CD4-positive, alpha-beta T cell (primary cell): ENCODE measurements at regions of chr1 and their contacts with region 1.

Region 1: GRCh38 chr1:147351140-147351835 is 108.8 kb downstream of the CHD1L start:
- DNase-seq: no peak
- ATAC-seq: no peak
- H3K4me3 ChIP-seq: no peak overlapping the region
- H3K4me3 Mint-ChIP-seq: no peak overlapping the region
- H3K27ac ChIP-seq: no peak overlapping the region
- H3K27ac Mint-ChIP-seq: no peak overlapping the region
- H3K4me1 ChIP-seq: no peaks in the 10 kb centered on the region
- H3K4me1 Mint-ChIP-seq: no peaks in the 10 kb centered on the region
- H3K27me3 ChIP-seq: peaks cover 3 to 8% of the 10 kb centered on the region in 2 experiments
- H3K27me3 Mint-ChIP-seq: peaks cover 29% of the 10 kb centered on the region
- CTCF ChIP-seq: no peak

Region 2: DNA sequence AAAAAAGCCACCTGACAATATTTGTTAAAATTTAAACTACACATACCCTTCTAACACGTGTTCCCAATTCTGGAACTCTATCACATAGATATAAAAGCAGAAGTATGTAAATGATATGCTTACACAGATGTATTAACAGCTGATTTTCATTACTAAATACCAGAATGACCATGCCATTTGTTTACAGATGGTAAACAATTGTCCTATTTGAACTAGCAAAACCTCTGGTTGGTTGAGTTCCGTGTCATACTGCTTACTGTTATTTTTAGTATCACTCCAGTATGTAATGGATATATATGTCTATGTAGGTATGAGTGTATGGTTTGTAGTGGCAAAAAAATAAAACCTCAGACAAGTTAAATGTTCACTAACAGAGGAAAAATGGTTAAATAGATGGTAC is 38.0 kb before region 1 on chr1:
- CTCF ChIA-PET with region 1: no interaction called
- POLR2A ChIA-PET with region 1: no interaction called
- intact Hi-C with region 1: loop called in 1 of 2 experiments (anchors 5 kb)
- DNase-seq: no peak
- ATAC-seq: no peak
- H3K4me3 ChIP-seq: no peak overlapping the region
- H3K4me3 Mint-ChIP-seq: no peak overlapping the region
- H3K27ac ChIP-seq: no peak overlapping the region
- H3K27ac Mint-ChIP-seq: no peak overlapping the region
- H3K4me1 ChIP-seq: no peaks in the 10 kb centered on the region
- H3K4me1 Mint-ChIP-seq: no peaks in the 10 kb centered on the region
- H3K27me3 ChIP-seq: no peaks in the 10 kb centered on the region
- H3K27me3 Mint-ChIP-seq: peaks cover 4% of the 10 kb centered on the region
- CTCF ChIP-seq: no peak